GM10248 (cell line): ENCODE measurements at regions of chr12 and their contacts with region 1.

Region 1: DNA sequence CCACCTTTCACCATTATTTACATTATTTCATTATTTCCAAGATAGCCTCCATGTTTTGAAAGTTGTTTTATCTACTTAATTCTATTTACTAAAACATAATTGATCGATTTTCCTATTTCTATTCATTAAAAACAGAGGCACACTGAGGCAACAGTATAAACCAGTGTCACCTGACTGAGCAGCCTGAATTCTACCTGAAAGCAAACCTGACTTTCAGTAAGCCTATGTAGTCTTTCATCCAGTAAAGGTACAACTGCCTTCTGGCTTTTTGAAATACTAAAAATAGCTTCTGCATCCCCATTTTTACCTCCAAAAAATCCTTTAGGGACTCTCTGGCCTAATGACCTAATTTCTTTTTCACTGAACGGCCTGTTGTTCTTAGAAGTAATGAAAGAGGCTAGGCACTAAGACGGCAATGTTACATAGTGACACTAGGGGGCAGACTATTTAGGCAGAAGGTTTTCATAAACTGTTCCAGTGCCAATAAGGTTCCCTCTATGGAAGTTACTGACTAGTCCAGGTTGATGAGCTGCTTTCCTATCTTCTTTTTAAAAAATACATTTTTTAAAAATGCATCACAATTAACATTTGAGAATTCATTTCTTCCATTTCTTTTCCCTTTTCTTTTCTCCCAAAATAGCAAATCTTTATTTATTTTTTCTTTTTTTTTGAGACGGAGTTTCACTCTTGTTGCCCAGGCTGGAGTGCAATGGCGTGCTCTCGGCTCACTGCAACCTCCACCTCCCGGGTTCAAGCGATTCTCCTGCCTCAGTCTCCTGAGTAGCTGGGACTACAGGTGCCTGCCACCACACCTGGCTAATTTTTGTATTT is 17.5 kb downstream of the ANAPC5 start:
- DNase-seq: peak; percentile 72
- CTCF ChIP-seq: peak; percentile 88

Region 2: DNA sequence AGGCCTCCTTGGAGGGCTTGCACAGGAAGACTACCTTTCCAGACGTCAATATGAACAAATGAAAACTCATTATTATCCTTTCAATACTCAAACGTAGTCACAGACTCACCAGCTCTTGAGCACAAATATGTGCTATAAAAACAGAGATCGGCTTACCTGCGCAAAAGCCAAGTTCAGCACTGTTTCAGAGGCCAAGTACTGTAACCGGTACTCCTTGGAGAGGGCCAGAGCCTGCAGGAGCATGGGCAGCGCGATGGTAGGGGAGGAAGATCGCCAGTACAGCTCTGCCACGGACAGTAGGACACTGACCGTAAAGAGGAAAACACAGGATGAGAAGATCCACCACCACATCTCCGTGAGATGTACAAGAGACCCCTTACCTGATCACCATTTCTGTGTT is 16.6 kb before region 1 on chr12:
- CTCF ChIA-PET with region 1: interaction called, 41 read pairs
- POLR2A ChIA-PET with region 1: no interaction called
- DNase-seq: no peak
- CTCF ChIP-seq: no peak

Region 3: GRCh38 chr12:121351820-121352681 is 17.3 kb after region 1 on chr12 and contains the start of gene ANAPC5:
- CTCF ChIA-PET with region 1: interaction called, 107 read pairs
- POLR2A ChIA-PET with region 1: no interaction called
- DNase-seq: peak; percentile 97
- CTCF ChIP-seq: no peak

Region 4: GRCh38 chr12:121404734-121405133 is 70.0 kb after region 1 on chr12:
- CTCF ChIA-PET with region 1: interaction called, 20 read pairs
- POLR2A ChIA-PET with region 1: no interaction called
- DNase-seq: no peak
- CTCF ChIP-seq: no peak